CD14-positive monocyte (primary cell): ENCODE measurements at regions of chr19 and their contacts with region 1.

Region 1: GRCh38 chr19:7919610-7920518 is at the start of gene SNAPC2:
- DNase-seq: peak; percentile 80 to 94 (median 92)
- H3K4me3 ChIP-seq: peak within 1 kb of the TSS; percentile 63 to 87 (median 69)
- H3K4me3 Mint-ChIP-seq: peak within 1 kb of the TSS; percentile 91 to 99
- H3K27ac ChIP-seq: peak within 1 kb of the TSS; percentile 83 to 88
- H3K27ac Mint-ChIP-seq: peak within 1 kb of the TSS; percentile 90 to 99 (median 97)
- H3K4me1 ChIP-seq: peaks cover 39 to 65% of the 10 kb centered on the region in 2 donors
- H3K4me1 Mint-ChIP-seq: peaks cover 52% of the 10 kb centered on the region
- H3K27me3 ChIP-seq: peaks cover 26 to 41% of the 10 kb centered on the region in 2 donors
- H3K27me3 Mint-ChIP-seq: peaks cover 47 to 64% (median 55%) of the 10 kb centered on the region in 3 donors
- CTCF ChIP-seq: no peak
- polyA plus RNA-seq, gene SNAPC2: 15.7 to 27.5 (median 18.3) TPM

Region 2: GRCh38 chr19:7680606-7681339 is 239.1 kb before region 1 on chr19 and contains the start of gene TRAPPC5:
- intact Hi-C with region 1: no loop called
- DNase-seq: peak; percentile 85 to 89 (median 89)
- H3K4me3 ChIP-seq: peak within 1 kb of the TSS; percentile 95 to 99 (median 96)
- H3K4me3 Mint-ChIP-seq: peak within 1 kb of the TSS; percentile 89 to 92
- H3K27ac ChIP-seq: peak within 1 kb of the TSS; percentile 96
- H3K27ac Mint-ChIP-seq: peak within 1 kb of the TSS; percentile 95 to 99 (median 98)
- H3K4me1 ChIP-seq: peaks cover 58 to 70% of the 10 kb centered on the region in 2 donors
- H3K4me1 Mint-ChIP-seq: peaks cover 61% of the 10 kb centered on the region
- H3K27me3 ChIP-seq: no peaks in the 10 kb centered on the region
- H3K27me3 Mint-ChIP-seq: peaks cover 0 to 2% (median 0%) of the 10 kb centered on the region in 3 donors
- CTCF ChIP-seq: peak; percentile 95
- polyA plus RNA-seq, gene TRAPPC5: 126 to 449 (median 414) TPM

Region 3: DNA sequence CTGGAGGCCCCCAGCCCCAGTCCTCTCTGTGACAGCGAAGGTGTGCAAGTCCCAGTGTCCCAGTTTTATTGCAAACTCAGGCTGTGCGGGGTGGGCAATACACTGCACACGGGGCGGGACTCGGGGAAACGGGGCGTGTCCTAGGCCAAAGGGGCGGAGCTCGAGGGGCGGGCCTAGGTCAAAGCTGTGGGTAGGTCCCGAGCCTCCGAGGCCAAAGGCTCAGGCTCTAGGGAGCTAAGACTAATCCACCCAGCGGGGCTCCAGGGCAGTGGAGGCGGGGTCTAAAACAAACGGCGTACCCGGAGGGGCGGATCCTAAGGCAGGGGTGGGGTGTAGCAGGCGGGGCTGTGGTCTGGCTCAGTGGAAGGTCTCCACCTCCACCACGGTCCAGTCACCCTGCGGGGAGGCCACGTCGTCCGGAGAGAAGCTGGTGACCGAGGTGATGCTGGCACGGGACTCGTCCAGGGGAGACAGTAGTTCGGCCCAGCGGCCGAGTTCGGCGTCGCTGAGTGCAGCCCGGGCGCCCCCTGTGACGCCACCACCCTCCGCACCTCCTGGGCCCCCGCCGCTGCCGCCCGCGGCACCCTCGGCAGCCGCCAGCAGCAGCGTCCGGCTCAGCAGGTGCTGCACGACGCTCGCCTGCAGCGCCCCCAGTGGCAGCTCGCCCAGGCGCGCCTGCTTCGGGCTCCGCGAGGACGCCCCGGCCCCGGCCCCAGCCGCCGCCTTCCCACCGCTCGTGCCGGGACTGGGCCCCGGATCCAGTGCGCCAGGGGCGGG is 51.0 kb before region 1 on chr19:
- intact Hi-C with region 1: loop called (anchors 5 kb)
- DNase-seq: peak; percentile 51 to 76 (median 69)
- H3K4me3 ChIP-seq: peak overlapping the region in 2 of 3 experiments; percentile 10 to 68
- H3K4me3 Mint-ChIP-seq: peak overlapping the region; percentile 66 to 83
- H3K27ac ChIP-seq: no peak overlapping the region
- H3K27ac Mint-ChIP-seq: no peak overlapping the region
- H3K4me1 ChIP-seq: peaks cover 43 to 50% of the 10 kb centered on the region in 2 donors
- H3K4me1 Mint-ChIP-seq: peaks cover 41% of the 10 kb centered on the region
- H3K27me3 ChIP-seq: peaks cover 30 to 70% of the 10 kb centered on the region in 2 donors
- H3K27me3 Mint-ChIP-seq: peaks cover 70 to 83% (median 77%) of the 10 kb centered on the region in 3 donors
- CTCF ChIP-seq: peak; percentile 97

Region 4: DNA sequence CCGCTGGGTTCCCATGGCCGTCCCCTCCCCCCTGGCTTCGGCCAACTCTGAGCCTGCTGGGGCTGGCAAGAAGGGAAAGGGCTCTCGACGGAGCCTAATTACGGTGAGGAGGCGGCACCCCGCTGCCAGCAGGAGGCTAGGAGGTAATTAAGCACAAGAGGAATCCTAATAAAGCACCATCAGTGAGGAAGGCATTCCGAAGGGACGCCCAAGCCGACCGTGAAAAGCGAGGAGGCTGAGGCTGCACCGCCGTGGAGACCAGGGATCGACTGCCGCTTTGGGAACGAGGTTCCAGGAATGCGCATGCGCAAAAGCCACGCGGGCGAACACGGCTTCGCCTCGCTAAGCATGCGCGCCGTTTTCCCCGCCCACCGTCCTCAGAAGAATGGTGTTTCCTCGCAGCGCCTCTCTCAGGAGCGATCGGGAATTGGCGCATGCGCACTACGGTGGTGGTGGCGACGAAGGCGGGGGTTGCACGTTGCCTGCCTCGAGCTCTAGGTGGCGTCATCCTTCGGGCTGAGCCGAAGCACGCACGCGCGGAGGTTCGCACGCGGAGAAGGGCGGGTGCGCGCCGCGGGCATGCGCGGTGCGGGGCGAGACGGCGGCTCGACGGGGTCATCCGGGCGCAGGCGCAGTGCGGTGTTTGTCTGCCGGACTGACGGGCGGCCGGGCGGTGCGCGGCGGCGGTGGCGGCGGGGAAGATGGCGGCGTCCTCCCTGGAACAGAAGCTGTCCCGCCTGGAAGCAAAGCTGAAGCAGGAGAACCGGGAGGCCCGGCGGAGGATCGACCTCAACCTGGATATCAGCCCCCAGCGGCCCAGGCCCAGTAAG is 16.4 kb before region 1 on chr19 and contains the start of gene MAP2K7:
- intact Hi-C with region 1: loop called (anchors 1 to 2 kb)
- DNase-seq: peak; percentile 99 to 100 (median 100)
- H3K4me3 ChIP-seq: peak within 1 kb of the TSS; percentile 61 to 88 (median 85)
- H3K4me3 Mint-ChIP-seq: peak within 1 kb of the TSS; percentile 81 to 87
- H3K27ac ChIP-seq: peak within 1 kb of the TSS; percentile 61 to 78
- H3K27ac Mint-ChIP-seq: peak within 1 kb of the TSS; percentile 85 to 94 (median 88)
- H3K4me1 ChIP-seq: peaks cover 19 to 26% of the 10 kb centered on the region in 2 donors
- H3K4me1 Mint-ChIP-seq: peaks cover 24% of the 10 kb centered on the region
- H3K27me3 ChIP-seq: no peaks in the 10 kb centered on the region
- H3K27me3 Mint-ChIP-seq: peaks cover 0 to 3% (median 3%) of the 10 kb centered on the region in 3 donors
- CTCF ChIP-seq: peak; percentile 45
- polyA plus RNA-seq, gene MAP2K7: 0.92 to 39.5 (median 1.5) TPM

Region 5: DNA sequence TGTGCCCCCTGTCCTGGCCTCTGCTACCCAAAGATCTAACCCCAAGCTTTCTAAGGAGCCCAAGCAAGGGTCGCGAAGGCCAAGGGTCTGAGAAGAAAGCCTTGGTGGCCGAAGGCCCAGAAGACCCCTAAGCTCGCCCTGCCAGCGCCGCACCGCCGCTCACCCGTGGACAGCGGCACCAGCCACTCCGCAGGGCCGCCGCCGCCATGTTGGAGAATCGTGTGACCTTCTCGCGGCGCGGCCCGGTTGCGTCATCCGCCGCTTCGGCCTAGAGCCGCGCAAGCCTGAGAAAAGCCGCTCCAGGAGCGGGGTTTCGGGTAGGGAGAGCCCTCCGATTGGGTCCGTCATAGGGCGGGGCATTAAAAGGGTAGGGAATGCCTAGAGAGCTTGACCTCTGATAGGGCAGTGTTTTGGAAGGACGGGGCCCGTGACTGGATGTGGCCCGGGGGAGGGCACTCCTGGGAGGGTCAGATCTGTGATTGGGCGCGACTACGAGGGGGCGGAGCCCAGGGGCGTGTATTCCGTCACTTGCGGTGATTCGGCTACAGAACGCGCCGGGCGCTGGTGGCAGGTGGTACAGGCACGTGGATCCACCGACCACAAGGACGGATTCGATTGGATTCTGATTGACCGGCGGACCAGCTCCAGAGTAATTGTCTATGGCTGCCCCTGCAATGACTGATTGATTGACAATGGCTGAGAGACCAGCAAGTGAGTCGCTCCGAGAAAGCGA is 23.7 kb after region 1 on chr19 and contains the start of gene TIMM44:
- intact Hi-C with region 1: loop called in 1 of 2 experiments (anchors 1 kb)
- DNase-seq: peak; percentile 99 to 100 (median 99)
- H3K4me3 ChIP-seq: peak within 1 kb of the TSS; percentile 44 to 84 (median 84)
- H3K4me3 Mint-ChIP-seq: peak within 1 kb of the TSS; percentile 87 to 92
- H3K27ac ChIP-seq: peak within 1 kb of the TSS; percentile 90 to 91
- H3K27ac Mint-ChIP-seq: peak within 1 kb of the TSS; percentile 94 to 98 (median 97)
- H3K4me1 ChIP-seq: peaks cover 8 to 21% of the 10 kb centered on the region in 2 donors
- H3K4me1 Mint-ChIP-seq: peaks cover 18% of the 10 kb centered on the region
- H3K27me3 ChIP-seq: no peaks in the 10 kb centered on the region
- H3K27me3 Mint-ChIP-seq: peaks cover 0 to 3% (median 0%) of the 10 kb centered on the region in 3 donors
- CTCF ChIP-seq: no peak
- polyA plus RNA-seq, gene TIMM44: 9.5 to 33.2 (median 10.4) TPM

Region 6: DNA sequence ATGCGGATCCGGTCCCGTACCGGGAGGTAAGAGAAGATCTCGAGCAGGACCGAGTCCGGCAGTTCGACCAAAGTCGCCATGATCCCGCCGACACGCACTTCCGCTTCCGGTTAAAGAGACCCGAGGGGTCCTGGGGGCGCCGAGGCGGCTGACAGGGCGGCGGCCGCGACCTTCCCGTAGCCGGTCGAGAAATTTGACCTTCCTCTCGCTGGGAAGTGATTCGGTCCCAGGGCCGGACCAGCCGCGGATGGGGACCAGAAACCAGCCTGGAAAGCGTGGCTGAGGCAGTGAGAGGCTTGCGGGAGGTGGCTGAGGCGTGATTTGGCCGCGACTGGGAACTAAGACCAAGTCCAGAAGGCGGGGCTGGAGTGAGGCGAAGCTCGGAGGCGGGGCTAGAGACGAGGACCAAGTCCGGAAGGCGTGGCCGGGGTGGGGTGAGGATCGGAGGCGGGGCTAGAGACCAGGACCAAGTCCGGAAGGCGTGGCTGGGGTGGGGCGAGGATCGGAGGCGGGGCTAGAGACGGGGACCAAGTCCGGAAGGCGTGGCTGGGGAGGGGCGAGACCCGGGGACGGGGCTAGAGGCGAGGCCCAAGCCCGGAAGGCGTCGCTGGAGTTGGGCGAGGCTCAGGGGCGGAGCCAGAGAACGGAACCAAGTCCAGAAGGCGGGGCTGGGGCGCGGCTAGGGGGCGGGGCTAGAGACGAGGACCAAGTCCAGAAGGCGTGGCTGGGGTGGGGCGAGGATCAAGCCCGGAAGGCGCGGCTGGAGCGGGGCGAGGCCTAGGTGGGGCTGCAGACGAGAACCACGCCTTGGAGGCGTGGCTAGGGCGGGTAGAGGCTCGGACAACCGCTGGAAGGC is 1899.1 kb after region 1 on chr19 and contains the start of gene FBXL12:
- intact Hi-C with region 1: loop called in 1 of 2 experiments (anchors 10 kb)
- DNase-seq: peak; percentile 100
- H3K4me3 ChIP-seq: peak within 1 kb of the TSS; percentile 82 to 99 (median 92)
- H3K4me3 Mint-ChIP-seq: peak within 1 kb of the TSS; percentile 87 to 92
- H3K27ac ChIP-seq: peak within 1 kb of the TSS; percentile 96 to 99
- H3K27ac Mint-ChIP-seq: peak within 1 kb of the TSS; percentile 96 to 98 (median 97)
- H3K4me1 ChIP-seq: peaks cover 15 to 22% of the 10 kb centered on the region in 2 donors
- H3K4me1 Mint-ChIP-seq: peaks cover 20% of the 10 kb centered on the region
- H3K27me3 ChIP-seq: no peaks in the 10 kb centered on the region
- H3K27me3 Mint-ChIP-seq: no peaks in the 10 kb centered on the region
- CTCF ChIP-seq: no peak
- polyA plus RNA-seq, gene FBXL12: 6.6 to 49.8 (median 8.1) TPM